A673 (cell line): ENCODE measurements at regions of chr16 and their contacts with region 1.

Region 1: GRCh38 chr16:81755915-81756614 is 23.0 kb upstream of the PLCG2 start:
- DNase-seq: peak; percentile 16
- H3K4me3 ChIP-seq: no peak overlapping the region
- H3K27ac ChIP-seq: no peak overlapping the region
- H3K4me1 ChIP-seq: no peaks in the 10 kb centered on the region
- H3K27me3 ChIP-seq: no peaks in the 10 kb centered on the region
- CTCF ChIP-seq: no peak

Region 2: DNA sequence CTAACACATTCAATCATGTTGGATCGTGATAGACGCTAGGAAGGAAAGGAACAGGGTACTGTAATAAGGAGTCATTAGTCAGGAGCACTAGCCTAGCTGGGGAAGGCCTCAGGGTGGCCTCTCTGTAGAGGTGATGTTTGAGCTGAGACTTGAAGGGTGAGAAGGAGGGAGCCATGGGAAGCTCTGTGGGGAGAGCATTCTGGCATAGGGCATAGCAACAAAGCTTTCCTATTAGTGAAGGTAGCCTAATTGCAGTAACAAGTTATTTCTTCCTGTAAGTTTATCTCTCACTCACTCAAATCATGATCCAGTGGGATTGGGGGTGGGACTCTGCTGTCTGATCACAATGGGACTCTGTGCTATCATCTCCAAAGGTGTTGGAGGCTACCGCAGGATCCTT is 39.1 kb after region 1 on chr16:
- CTCF ChIA-PET with region 1: no interaction called
- POLR2A ChIA-PET with region 1: no interaction called
- intact Hi-C with region 1: loop called (anchors 1 kb)
- DNase-seq: no peak
- H3K4me3 ChIP-seq: no peak overlapping the region
- H3K27ac ChIP-seq: no peak overlapping the region
- H3K4me1 ChIP-seq: peaks cover 14% of the 10 kb centered on the region
- H3K27me3 ChIP-seq: no peaks in the 10 kb centered on the region
- CTCF ChIP-seq: no peak